A549 (cell line): ENCODE measurements at regions of chr1 and their contacts with region 1.

Region 1: GRCh38 chr1:86833461-86834215 is 80.3 kb downstream of the SELENOF start:
- DNase-seq: peak; percentile 60 to 86
- ATAC-seq: peak; percentile 97 to 99
- H3K4me3 ChIP-seq: no peak overlapping the region
- H3K27ac ChIP-seq: no peak overlapping the region
- H3K4me1 ChIP-seq: 0 out of 3 replicates have a peak, but pooled peaks cover 3% of the 10 kb centered on the region
- CTCF ChIP-seq: peak; percentile 70
- EP300 ChIP-seq: no peak
- POLR2A ChIP-seq: no peak
- RAD21 ChIP-seq: peak; percentile 77 to 80

Region 2: DNA sequence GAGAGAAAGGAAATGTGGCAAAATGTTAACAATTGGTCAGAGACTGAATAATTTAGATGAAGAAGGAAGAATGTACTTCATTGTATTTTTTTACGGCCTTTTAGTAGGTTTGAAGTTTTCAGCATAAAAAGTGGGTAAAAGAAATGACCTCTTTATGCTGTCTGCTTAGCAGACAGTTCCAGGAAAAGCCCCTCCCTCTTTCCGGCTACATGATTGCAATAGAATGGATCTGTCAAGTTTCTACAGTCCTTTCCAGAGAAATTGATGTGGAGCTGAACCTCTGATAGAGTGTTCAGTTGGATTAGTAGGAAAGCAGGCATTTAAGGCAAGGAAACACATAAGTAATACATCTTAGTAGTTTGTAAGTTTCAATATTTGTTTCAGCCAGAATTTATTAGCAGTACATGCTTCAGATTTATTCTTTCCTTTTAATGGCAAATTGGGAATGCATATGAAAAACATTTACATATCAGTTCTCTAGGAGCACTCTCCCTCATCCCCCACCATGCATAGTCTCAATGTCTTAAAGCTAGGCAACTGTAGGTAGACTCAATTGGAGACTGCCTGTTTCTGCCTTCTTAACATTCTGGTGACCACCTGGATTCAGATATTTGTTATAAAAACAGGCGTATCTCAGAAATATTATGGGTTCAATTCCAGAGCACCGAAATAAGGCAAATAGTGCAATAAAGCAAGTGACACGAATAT is 117.2 kb after region 1 on chr1:
- CTCF ChIA-PET with region 1: no interaction called
- POLR2A ChIA-PET with region 1: interaction called, 10 read pairs
- DNase-seq: no peak
- ATAC-seq: no peak
- H3K4me3 ChIP-seq: no peak overlapping the region
- H3K27ac ChIP-seq: no peak overlapping the region
- H3K4me1 ChIP-seq: no peaks in the 10 kb centered on the region
- CTCF ChIP-seq: no peak
- EP300 ChIP-seq: no peak
- POLR2A ChIP-seq: no peak
- RAD21 ChIP-seq: no peak

Region 3: DNA sequence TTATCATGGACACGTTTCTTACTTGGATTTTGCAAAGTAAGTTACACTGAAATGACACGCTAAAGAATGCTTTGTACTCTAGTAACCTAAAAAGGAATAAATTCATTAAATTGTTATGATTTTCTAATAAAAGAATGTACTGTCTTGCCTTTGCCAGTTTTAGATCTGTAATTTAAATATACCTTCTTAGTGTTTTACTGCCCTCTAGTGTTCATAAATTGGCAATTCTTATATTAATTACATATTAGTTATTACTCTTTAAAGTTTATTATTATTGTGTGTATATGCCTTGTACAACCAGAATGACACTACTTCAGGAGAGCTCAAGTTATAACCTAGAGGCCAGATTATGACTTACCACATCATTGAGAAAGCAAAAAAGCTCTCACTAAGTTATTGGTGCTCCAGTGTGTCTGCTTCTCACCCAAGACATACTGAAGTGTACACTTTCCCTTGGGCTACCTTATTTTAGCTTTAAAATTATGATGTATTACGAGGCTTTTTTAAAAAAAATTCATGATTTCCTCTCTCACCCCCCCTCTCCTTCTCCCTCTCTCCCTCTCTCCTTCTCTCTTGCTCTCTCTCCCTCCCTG is 250.7 kb after region 1 on chr1:
- CTCF ChIA-PET with region 1: interaction called, 12 read pairs
- POLR2A ChIA-PET with region 1: no interaction called
- DNase-seq: peak; percentile 1 to 20
- ATAC-seq: peak in 1 of 2 experiments; percentile 42; a peak in 3 of 6 replicates
- H3K4me3 ChIP-seq: no peak overlapping the region
- H3K27ac ChIP-seq: no peak overlapping the region
- H3K4me1 ChIP-seq: no peaks in the 10 kb centered on the region
- CTCF ChIP-seq: peak; percentile 56
- EP300 ChIP-seq: no peak
- POLR2A ChIP-seq: no peak
- RAD21 ChIP-seq: peak; percentile 56 to 63